Heart left ventricle (tissue), 16 donors: ENCODE measurements at regions of chr3 and their contacts with region 1.

Region 1: GRCh38 chr3:24389108-24390090 is 105.3 kb downstream of the THRB start:
- DNase-seq: no peak
- ATAC-seq: peak in 1 of 4 donors; percentile 31
- H3K4me3 ChIP-seq: no peak overlapping the region
- H3K27ac ChIP-seq: peak overlapping the region in 1 of 12 donors; percentile 67
- H3K4me1 ChIP-seq: peaks cover 0 to 37% (median 6%) of the 10 kb centered on the region in 12 donors
- H3K27me3 ChIP-seq: no peaks in the 10 kb centered on the region
- CTCF ChIP-seq: no peak
- POLR2A ChIP-seq: no peak

Region 2: DNA sequence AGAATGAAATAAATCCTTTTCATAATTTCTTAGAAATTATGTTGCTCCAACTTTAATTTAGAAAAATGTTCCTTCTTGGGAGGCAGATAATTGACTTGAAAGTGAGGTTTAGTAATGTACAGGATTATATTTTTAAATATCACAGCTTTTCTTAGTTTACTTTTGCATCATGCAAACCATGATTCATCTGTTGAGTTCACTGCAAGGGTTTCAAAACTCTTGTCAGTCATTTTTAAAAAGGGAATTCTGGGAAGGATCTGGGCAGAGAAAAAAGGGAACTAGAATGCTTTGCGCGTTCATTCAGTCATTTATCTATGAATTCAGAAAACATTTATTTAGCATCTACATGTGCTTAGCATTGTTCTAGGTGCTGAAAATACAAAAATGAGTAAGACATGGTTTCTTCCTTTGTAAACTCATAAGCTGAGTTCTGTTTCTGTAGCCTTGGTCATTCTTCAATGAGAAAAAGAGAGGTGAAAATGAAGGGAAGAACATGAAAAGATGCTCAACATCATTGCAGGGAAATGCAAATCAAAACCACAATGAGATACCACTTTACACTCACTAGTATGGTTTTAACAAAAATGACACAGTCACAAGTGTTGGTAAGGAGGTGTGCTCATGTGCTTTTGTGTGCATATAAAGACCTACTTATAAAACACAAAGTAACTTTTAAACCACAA is 235.2 kb before region 1 on chr3:
- intact Hi-C with region 1: no loop called
- DNase-seq: no peak
- ATAC-seq: no peak
- H3K4me3 ChIP-seq: no peak overlapping the region
- H3K27ac ChIP-seq: no peak overlapping the region
- H3K4me1 ChIP-seq: peaks cover 0 to 24% (median 6%) of the 10 kb centered on the region in 12 donors
- H3K27me3 ChIP-seq: no peaks in the 10 kb centered on the region
- CTCF ChIP-seq: no peak
- POLR2A ChIP-seq: no peak

Region 3: GRCh38 chr3:24311881-24312280 is 77.5 kb before region 1 on chr3:
- intact Hi-C with region 1: no loop called
- DNase-seq: no peak
- ATAC-seq: peak in 1 of 4 donors; percentile 41
- H3K4me3 ChIP-seq: no peak overlapping the region
- H3K27ac ChIP-seq: no peak overlapping the region
- H3K4me1 ChIP-seq: peaks cover 0 to 34% (median 0%) of the 10 kb centered on the region in 12 donors
- H3K27me3 ChIP-seq: no peaks in the 10 kb centered on the region
- CTCF ChIP-seq: no peak
- POLR2A ChIP-seq: no peak

Region 4: GRCh38 chr3:24323272-24323671 is 66.1 kb before region 1 on chr3:
- intact Hi-C with region 1: no loop called
- DNase-seq: no peak
- ATAC-seq: no peak
- H3K4me3 ChIP-seq: no peak overlapping the region
- H3K27ac ChIP-seq: no peak overlapping the region
- H3K4me1 ChIP-seq: no peaks in the 10 kb centered on the region
- H3K27me3 ChIP-seq: no peaks in the 10 kb centered on the region
- CTCF ChIP-seq: no peak
- POLR2A ChIP-seq: no peak

Region 5: DNA sequence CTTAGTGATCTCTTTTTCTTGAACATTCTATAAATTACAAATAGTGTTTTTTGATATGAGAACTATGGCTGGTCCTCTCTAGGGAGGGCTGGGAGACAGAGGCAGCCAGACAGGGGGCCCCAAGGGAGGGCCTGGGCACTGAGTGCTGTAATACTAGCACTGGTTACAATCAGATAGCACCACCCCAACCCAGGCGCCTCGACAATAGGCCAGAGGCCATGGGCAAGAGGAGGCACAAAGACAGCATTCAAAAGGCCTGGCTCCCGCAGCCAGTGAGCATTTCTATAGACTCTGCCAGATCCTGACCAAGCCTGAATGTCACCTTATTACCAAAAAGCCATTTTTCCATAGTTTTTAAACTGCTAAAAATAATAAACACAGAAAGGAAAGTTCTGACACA is 53.3 kb before region 1 on chr3:
- intact Hi-C with region 1: loop called in 1 of 10 experiments (anchors 10 kb)
- DNase-seq: no peak
- ATAC-seq: no peak
- H3K4me3 ChIP-seq: no peak overlapping the region
- H3K27ac ChIP-seq: no peak overlapping the region
- H3K4me1 ChIP-seq: peaks cover 0 to 32% (median 7%) of the 10 kb centered on the region in 12 donors
- H3K27me3 ChIP-seq: no peaks in the 10 kb centered on the region
- CTCF ChIP-seq: no peak
- POLR2A ChIP-seq: no peak

Region 6: DNA sequence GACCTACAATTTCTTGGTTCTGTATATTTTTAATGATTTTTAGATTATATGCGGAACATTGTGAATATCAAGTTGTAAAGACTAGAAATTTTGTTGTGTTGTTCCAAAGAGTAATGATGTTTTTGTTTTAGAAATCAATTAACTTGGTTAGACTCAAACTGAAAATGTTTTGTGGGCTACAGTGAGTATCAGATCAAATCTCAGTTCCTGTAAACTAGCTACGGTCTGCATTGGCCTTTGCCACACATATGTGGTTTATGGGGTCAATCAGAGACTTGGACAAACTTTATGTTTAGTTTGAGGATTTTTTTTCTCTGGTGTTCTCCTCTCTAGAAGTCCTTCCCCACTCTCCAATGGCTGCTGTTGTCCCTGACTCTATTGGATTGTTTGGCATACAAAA is 413.2 kb after region 1 on chr3:
- intact Hi-C with region 1: no loop called
- DNase-seq: no peak
- ATAC-seq: no peak
- H3K4me3 ChIP-seq: no peak overlapping the region
- H3K27ac ChIP-seq: no peak overlapping the region
- H3K4me1 ChIP-seq: no peaks in the 10 kb centered on the region
- H3K27me3 ChIP-seq: peaks cover 0 to 5% (median 0%) of the 10 kb centered on the region in 9 donors
- CTCF ChIP-seq: no peak
- POLR2A ChIP-seq: no peak